GM13976 (cell line): ENCODE measurements at regions of chr3 and their contacts with region 1.

Region 1: DNA sequence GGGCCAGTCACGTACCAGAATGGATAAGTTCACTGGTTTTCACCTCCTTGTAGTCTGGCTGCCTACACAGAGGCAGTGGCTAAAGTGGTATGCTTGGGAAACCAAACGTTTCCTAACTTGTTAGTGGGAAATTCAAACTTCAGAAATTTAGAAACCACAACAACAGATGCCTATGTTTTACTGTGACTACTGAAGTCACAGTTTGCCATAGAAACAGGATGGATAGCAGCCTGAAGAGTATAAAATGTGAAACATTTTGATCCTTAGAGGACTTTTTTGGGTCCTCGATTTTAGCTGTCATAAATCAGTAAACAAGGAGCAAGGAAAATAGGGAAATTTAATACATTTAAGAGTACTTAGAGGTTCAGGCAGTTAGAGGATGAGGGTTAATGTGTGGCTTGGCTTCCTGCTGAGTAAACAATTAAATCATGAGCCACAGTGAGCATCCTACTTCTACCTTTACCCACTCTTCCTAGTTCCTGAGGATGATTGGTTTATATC is 48.6 kb downstream of the CMSS1 start:
- DNase-seq: no peak
- CTCF ChIP-seq: no peak

Region 2: DNA sequence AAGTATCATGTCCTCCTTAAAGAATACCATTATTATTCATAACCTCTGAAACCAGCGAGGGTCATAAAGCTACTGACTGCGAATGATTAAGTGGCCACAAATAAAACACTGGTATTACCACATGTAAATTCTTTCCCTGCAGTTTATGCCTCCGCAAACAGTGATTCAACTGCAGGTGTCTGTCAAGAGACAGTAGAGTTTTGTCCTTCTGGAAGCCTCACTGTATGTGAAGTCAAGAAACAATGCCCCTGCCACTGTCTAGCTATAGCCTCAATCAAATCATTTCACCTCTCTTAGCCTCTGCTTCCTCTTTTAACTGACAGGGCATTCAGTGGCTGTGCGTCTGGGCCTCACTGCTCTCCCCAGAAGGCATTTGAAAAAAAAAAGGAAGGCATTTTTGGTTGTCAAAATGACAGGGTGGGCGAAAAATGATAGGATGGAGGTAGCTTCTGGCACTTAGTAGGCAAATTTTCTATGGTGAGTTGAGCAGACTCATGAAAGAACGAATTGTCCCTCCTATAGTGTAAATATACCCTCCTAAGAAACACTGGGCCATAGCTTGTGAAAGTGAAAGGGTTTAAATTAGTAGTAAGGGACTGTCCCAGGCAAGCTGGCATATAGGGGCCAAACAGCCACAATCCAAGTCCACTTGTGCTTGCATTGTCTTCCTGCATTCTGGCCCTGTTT is 181.3 kb after region 1 on chr3:
- in situ Hi-C with region 1: loop called (anchors 10 kb)
- DNase-seq: peak; percentile 33
- CTCF ChIP-seq: no peak